Stomach (tissue), 19 donors: ENCODE measurements at regions of chr2 and their contacts with region 1.

Region 1: DNA sequence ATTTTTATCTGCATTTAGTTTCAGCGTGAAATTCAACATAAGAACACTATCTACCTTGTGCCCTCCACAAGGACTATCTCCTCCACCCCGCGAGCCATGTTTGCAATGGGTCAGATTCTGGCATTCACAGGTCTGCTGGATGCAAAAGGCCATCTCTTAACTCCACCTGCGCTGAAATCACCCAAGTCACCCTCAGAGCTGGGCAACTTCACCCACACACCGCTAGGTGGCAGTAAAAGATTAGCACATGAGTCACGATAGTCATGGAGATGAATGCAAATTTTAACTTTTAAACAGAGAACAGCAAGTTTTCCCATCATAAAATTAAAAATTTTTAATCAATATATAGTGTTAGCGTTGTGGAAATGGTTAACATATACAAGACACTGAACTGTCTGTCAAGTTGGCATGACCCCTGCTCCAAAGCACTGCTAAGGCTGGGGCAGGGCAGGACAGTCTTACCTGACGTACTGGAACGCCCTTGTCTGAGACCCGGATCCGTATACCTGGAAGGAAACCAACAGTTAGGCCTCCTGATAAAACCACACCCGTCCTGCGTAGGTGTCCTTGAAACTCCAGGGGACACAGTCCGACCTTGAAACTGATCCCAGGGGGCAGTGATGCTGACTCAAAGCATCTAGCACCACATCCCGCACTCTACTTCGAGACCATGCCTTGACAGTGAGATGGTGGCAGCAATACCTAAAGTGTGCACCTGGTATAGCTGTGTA is 89.6 kb downstream of the UXS1 start:
- DNase-seq: peak; percentile 74 to 86
- H3K4me3 ChIP-seq: no peak overlapping the region
- H3K27ac ChIP-seq: no peak overlapping the region
- H3K4me1 ChIP-seq: peaks cover 0 to 32% (median 13%) of the 10 kb centered on the region in 4 donors
- H3K27me3 ChIP-seq: no peaks in the 10 kb centered on the region
- CTCF ChIP-seq: peak in 6 of 7 experiments; percentile 78 to 98 (median 94)
- EP300 ChIP-seq: no peak
- POLR2A ChIP-seq: no peak

Region 2: DNA sequence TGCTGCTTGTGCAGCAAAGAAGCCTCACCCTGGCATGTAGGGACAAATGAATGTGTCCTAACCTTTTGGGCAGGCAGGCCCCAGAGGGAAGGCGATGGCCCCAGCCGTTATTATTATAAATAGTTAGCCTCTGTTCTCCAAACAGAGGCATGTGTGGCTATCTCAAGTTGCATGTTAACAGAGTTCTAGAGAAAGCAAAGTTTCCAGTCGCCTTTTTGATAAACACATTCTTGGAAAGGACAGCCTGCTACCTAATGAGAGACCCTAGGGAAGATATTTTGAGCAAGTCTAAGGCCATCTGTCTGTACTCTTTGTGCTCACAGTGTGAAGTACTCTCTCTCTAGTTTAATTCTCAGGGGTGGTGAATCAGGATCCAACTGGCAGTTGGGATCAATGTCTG is 608.2 kb before region 1 on chr2:
- intact Hi-C with region 1: no loop called
- DNase-seq: no peak
- H3K4me3 ChIP-seq: no peak overlapping the region
- H3K27ac ChIP-seq: no peak overlapping the region
- H3K4me1 ChIP-seq: peaks cover 0 to 29% (median 4%) of the 10 kb centered on the region in 4 donors
- H3K27me3 ChIP-seq: no peaks in the 10 kb centered on the region
- CTCF ChIP-seq: no peak
- EP300 ChIP-seq: no peak
- POLR2A ChIP-seq: no peak

Region 3: DNA sequence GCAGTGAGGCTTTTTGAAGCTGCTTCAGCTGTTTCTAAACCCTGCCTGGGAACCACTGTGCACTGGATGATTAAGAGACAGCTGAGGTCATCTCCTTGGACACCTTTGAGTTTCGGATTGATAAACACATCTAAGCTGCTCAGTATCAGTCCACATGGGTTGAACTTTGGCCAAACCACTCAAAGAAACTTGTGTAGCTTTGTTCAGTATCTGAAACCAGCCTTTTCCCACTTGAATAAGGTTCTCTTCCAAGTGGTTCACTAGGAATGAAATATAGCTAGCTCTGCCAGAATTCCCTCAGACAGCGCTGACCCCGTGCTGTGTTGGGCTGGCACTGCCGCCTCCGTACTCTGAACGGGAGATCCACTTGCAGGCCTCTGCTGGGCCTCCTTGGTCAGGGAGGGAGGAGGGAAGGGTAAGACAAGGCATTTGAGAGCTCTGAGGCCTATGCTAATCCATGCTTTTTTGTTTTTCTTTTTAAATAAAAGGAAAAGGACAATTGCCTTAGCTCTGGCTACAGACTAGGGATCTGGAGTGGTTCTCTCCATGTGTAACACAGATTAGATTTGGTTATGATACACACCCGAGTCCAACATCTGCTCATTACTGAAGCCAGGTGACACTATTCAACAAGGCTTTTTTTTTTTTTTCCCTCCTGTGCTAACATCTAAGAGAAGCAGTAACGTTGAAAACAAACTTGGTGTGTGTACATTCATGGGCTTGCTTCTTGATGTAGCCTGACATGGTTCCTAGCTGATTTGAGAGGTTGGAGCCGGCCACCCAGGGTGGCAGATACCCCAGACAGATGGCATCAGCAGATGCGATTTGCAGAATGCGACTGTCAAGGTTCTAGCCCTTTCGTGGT is 292.1 kb before region 1 on chr2:
- intact Hi-C with region 1: no loop called
- DNase-seq: peak in 1 of 2 donors; percentile 76
- H3K4me3 ChIP-seq: no peak overlapping the region
- H3K27ac ChIP-seq: peak overlapping the region in 4 of 5 donors; percentile 49 to 66 (median 56)
- H3K4me1 ChIP-seq: peaks cover 23 to 85% (median 57%) of the 10 kb centered on the region in 4 donors
- H3K27me3 ChIP-seq: no peaks in the 10 kb centered on the region
- CTCF ChIP-seq: no peak
- EP300 ChIP-seq: no peak
- POLR2A ChIP-seq: no peak

Region 4: GRCh38 chr2:106537047-106537446 is 432.6 kb after region 1 on chr2:
- intact Hi-C with region 1: loop called (anchors 5 kb)
- DNase-seq: peak in 1 of 2 donors; percentile 66
- H3K4me3 ChIP-seq: no peak overlapping the region
- H3K27ac ChIP-seq: no peak overlapping the region
- H3K4me1 ChIP-seq: peaks cover 0 to 6% (median 2%) of the 10 kb centered on the region in 4 donors
- H3K27me3 ChIP-seq: peaks cover 0 to 8% (median 0%) of the 10 kb centered on the region in 3 donors
- CTCF ChIP-seq: no peak
- EP300 ChIP-seq: no peak
- POLR2A ChIP-seq: no peak

Region 5: DNA sequence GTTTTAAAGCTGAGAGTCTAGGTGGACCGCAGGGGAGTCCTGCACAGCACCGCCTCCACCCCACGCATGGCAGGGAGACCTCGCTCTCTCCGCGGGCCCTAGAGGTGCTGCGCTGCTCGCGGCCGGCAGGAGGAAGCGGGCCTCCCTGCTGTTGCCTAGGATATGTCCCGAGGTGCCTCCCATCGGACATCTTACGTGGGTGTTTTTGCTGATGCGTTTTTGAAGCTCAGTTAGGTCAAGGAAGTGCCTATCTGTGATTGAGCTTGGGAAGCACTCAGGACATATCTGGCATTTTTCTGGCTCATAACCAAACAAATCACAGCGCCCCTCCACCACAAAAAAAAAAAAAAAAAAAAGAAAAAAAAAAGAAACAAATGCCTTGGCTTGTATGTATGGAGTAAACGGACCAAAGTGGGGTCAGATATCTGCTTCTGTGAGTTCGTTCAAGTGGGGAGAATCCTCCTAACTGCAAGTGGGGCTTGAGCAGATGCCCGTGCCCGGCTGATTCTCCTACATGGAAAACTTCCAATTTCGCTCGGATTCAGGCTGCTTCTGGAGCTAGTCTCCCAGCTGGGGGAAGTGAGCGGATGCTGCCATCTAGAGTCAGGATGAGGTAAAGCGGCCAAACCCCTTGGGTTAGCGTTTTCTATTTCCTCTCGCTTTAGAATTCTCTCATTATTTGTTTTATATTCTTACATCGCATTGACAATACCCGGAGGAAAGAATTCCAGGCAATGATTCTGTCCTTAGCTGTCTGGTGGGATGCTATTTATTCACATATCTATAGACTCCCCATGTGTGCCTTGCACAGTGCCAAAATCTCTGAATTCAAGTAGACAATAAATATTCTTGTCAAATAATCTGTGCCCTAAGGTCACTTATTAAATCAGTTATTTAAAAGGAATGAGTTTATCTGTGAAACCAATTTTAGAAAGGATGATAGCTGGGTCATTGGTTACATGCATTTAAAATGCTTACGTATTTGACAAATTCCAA is 477.9 kb after region 1 on chr2:
- intact Hi-C with region 1: loop called (anchors 10 kb)
- DNase-seq: peak; percentile 76 to 94
- H3K4me3 ChIP-seq: peak overlapping the region; percentile 21 to 43 (median 34)
- H3K27ac ChIP-seq: peak overlapping the region in 1 of 5 donors; percentile 24
- H3K4me1 ChIP-seq: peaks cover 4 to 13% (median 9%) of the 10 kb centered on the region in 4 donors
- H3K27me3 ChIP-seq: peaks cover 0 to 17% (median 11%) of the 10 kb centered on the region in 3 donors
- CTCF ChIP-seq: peak in 5 of 7 experiments; percentile 68 to 77 (median 73)
- EP300 ChIP-seq: no peak
- POLR2A ChIP-seq: no peak